ENCODE measurements at regions of chr4 and their contacts with region 1.

Region 1: DNA sequence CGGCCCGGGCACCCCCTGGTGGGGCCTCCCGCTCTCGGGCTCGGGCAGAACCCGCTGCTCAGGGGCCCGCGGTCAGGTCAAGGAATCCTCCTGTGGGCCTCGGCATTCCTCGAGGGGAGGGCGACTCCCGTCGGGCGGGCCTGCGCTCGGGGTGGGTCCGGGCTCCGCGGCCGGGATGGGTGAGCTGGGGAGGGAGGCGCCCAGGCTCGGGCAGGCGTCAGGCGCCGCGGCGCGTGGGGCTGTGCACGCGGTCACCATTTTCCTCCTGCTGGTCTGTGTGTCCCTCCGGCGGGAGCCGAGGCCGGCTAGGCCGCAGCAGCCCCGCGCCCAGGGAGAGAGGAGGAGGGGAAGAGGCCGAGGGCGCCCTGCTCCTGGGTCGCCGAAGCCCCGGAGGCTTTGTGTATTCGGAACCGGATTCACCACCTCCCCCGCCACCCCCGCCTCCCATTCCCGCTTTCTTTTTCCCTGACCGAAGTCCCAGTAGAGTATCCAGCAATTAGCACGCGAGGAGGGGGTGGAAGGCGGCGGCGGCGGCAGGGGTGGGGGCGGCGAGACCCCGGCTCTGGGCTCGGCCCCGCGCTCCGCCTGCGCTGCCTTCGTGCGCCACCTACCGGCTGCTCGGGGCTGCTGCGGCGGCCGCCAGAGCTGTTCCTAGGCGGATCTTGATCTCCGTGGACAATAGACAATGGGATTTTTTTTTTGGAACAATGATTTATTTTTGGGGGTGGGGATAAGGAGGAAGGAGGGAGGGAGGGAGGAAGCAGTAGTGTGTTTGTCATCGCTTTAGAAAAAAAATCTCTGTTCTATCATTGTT is 99.0 kb upstream of the MAML3 start:
- DNase-seq: no peak
- H3K4me3 ChIP-seq: peak overlapping the region; percentile 59
- CTCF ChIP-seq: peak; percentile 88

Region 2: GRCh38 chr4:139734875-139735380 is 518.0 kb before region 1 on chr4:
- CTCF ChIA-PET with region 1: interaction called, 17 read pairs
- POLR2A ChIA-PET with region 1: no interaction called
- DNase-seq: peak; percentile 14
- H3K4me3 ChIP-seq: peak overlapping the region; percentile 59
- CTCF ChIP-seq: peak; percentile 86

Region 3: DNA sequence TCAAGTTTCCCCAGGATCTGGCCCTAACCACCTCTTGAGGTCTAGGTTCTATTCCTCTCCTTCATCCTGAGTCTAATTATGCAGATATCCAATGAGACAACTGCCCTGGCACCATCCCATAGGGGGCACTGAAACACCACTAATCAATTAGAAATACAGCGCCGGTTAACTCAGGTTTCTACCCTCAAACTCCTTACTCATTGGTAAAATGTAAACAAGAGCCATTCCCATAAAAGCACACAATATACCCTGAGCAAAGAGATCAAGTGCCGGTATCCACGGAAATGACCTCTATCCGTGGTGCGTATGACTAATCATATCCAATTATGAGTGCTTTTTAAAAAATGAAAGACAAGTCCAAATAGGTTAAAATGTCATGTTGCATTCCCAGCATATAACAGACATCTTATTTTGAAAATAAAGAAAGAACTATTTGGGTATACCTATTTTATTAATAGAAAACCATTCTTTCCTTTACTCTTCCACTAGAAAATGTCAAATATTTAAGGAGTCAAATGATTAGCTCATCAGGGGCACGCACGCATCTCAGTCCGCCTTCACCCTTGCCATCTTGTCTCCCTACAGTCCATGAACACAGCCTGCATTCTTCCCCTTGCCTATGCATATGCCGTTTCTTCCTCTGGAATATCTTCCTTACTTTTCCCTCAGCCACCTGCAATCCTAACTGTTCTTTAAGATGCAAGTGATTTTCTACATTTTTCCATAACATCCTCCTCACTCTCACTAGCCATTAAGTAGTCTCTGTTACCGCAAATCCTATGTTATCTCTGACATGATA is 240.1 kb before region 1 on chr4:
- CTCF ChIA-PET with region 1: interaction called, 22 read pairs
- POLR2A ChIA-PET with region 1: no interaction called
- DNase-seq: no peak
- H3K4me3 ChIP-seq: no peak overlapping the region
- CTCF ChIP-seq: peak; percentile 55

Region 4: DNA sequence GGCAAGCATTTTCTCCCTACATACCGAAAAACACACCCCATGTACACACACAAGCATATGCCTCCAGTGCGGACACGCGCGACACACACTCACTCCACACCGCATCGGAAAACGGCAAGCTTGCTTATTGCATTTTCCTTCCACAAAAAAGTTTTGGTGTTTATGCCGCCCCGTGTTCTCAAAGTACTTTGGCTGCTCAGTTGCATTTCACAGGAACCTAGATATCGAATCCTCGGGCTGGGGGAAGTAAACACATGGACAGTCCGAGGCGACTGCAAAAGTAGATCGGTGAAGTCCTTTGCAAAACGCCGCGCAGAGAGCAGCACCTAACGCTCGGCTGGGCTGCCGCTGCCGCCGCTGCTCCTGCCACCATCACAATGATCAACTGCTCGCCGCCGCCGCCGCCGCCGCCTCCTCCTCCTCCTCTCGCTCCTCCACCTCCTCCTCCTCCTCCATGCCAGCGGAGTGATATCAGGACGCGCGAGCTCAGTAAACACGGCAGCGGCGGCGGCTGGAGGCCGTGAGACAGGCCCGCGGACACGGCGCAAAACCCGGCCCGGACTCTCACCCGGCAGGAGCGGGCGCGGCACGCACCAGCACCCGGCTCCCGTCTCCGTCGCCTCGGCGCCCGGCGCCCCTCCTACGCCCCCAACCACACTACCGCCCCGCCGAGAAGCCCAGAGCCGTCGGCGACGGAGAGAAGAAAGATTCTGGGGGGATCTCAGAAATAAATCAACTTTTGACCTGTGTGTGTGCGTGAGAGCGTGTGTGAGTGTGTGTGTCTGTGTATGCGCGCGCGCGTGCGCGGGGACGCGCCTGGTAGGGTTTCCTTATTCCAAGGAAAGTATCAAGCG is 99.0 kb before region 1 on chr4 and contains the start of gene MAML3:
- CTCF ChIA-PET with region 1: interaction called, 11 read pairs
- POLR2A ChIA-PET with region 1: interaction called, 10 read pairs
- DNase-seq: peak; percentile 79
- H3K4me3 ChIP-seq: peak within 1 kb of the TSS; percentile 79
- CTCF ChIP-seq: no peak

Region 5: GRCh38 chr4:140266991-140267426 is 14.1 kb after region 1 on chr4:
- CTCF ChIA-PET with region 1: interaction called, 22 read pairs
- POLR2A ChIA-PET with region 1: no interaction called
- DNase-seq: no peak
- H3K4me3 ChIP-seq: no peak overlapping the region
- CTCF ChIP-seq: no peak

Region 6: GRCh38 chr4:140483445-140483844 is 230.5 kb after region 1 on chr4:
- CTCF ChIA-PET with region 1: no interaction called
- POLR2A ChIA-PET with region 1: no interaction called
- DNase-seq: no peak
- H3K4me3 ChIP-seq: no peak overlapping the region
- CTCF ChIP-seq: no peak

Region 7: GRCh38 chr4:140595065-140595464 is 342.1 kb after region 1 on chr4:
- CTCF ChIA-PET with region 1: no interaction called
- POLR2A ChIA-PET with region 1: no interaction called
- DNase-seq: no peak
- H3K4me3 ChIP-seq: no peak overlapping the region
- CTCF ChIP-seq: no peak

Measured in AG04449 (cell line).